ENCODE measurements at regions of chr13 and their contacts with region 1.

Region 1: GRCh38 chr13:25085125-25085742 is 10.7 kb upstream of the PABPC3 start:
- DNase-seq: peak; percentile 45
- H3K4me3 Mint-ChIP-seq: no peak overlapping the region
- H3K27ac Mint-ChIP-seq: no peak overlapping the region
- H3K4me1 Mint-ChIP-seq: no peaks in the 10 kb centered on the region
- H3K27me3 Mint-ChIP-seq: peaks cover 8% of the 10 kb centered on the region

Region 2: GRCh38 chr13:25114220-25114619 is 29.0 kb after region 1 on chr13:
- CTCF ChIA-PET with region 1: interaction called, 11 read pairs
- intact Hi-C with region 1: loop called (anchors 1 kb)
- DNase-seq: peak; percentile 81
- H3K4me3 Mint-ChIP-seq: no peak overlapping the region
- H3K27ac Mint-ChIP-seq: no peak overlapping the region
- H3K4me1 Mint-ChIP-seq: peaks cover 3% of the 10 kb centered on the region
- H3K27me3 Mint-ChIP-seq: peaks cover 33% of the 10 kb centered on the region

Measured in activated naive CD4-positive, alpha-beta T cell treated with anti-CD3 and anti-CD28 coated beads for 36 hours (primary cell).